Gastrocnemius medialis (tissue), 4 donors: ENCODE measurements at regions of chr12 and their contacts with region 1.

Region 1: DNA sequence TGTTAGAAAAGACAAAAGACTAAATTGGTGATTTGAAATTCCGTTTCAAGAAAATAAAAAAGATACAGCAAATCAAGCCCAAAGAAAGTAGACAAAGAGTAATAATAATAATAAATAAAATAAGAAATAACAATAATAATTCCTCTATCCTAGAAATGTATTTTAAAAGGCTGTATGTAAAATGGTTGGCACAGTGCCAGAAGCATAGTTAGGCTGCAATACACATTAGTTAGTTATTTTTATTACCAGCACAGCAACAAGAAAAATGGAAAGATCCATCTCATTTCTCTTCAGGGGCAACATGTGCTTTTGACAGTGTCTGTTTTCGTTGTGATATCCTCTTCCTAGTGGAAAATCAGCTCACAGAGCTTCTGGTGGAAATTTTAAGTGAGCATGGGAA is 174.1 kb upstream of the TMTC1 start:
- DNase-seq: no peak
- ATAC-seq: no peak
- H3K4me3 ChIP-seq: no peak overlapping the region
- H3K27ac ChIP-seq: no peak overlapping the region
- H3K4me1 ChIP-seq: no peaks in the 10 kb centered on the region
- H3K27me3 ChIP-seq: no peaks in the 10 kb centered on the region
- CTCF ChIP-seq: no peak
- POLR2A ChIP-seq: no peak

Region 2: DNA sequence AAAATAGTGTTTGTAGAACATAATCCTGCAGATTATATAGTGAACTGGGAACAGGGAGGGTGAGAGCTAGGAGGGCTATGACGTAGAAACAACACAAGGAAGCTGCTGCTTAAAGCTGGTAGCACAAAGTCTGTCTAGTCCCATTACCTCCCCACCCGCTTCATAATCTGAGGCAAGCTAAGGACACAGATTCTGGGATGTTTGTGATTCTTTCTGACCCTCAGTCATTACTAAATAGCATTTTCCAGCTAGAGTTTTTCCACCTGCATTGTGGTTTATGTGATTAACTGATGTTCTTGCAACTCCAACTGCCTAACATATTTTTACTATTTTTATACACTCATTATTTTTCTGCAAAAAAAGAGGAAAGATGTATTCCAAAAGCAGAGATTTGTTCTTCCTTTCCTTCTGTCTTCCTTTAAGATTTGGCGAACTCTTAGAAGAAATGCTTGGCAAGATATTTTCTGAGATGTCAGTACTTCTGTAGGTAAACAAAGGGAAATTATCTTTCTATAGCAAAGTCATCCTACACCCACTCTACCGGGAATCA is 1102.0 kb before region 1 on chr12:
- in situ Hi-C with region 1: no loop called
- intact Hi-C with region 1: no loop called
- DNase-seq: no peak
- ATAC-seq: no peak
- H3K4me3 ChIP-seq: no peak overlapping the region
- H3K27ac ChIP-seq: no peak overlapping the region
- H3K4me1 ChIP-seq: no peaks in the 10 kb centered on the region
- H3K27me3 ChIP-seq: no peaks in the 10 kb centered on the region
- CTCF ChIP-seq: no peak
- POLR2A ChIP-seq: no peak

Region 3: GRCh38 chr12:29782285-29782870 is 175.5 kb before region 1 on chr12:
- in situ Hi-C with region 1: no loop called
- intact Hi-C with region 1: no loop called
- DNase-seq: peak; percentile 25 to 29
- ATAC-seq: peak; percentile 66 to 68
- H3K4me3 ChIP-seq: peak overlapping the region; percentile 65 to 85 (median 74)
- H3K27ac ChIP-seq: peak overlapping the region; percentile 86 to 99 (median 97)
- H3K4me1 ChIP-seq: peaks cover 37 to 40% of the 10 kb centered on the region in 2 donors
- H3K27me3 ChIP-seq: no peaks in the 10 kb centered on the region
- CTCF ChIP-seq: no peak
- POLR2A ChIP-seq: peak; percentile 5 to 40

Region 4: GRCh38 chr12:29901585-29901984 is 56.2 kb before region 1 on chr12:
- in situ Hi-C with region 1: no loop called
- intact Hi-C with region 1: no loop called
- DNase-seq: no peak
- ATAC-seq: no peak
- H3K4me3 ChIP-seq: no peak overlapping the region
- H3K27ac ChIP-seq: no peak overlapping the region
- H3K4me1 ChIP-seq: no peaks in the 10 kb centered on the region
- H3K27me3 ChIP-seq: no peaks in the 10 kb centered on the region
- CTCF ChIP-seq: no peak
- POLR2A ChIP-seq: no peak

Region 5: GRCh38 chr12:29944269-29945000 is 13.4 kb before region 1 on chr12:
- in situ Hi-C with region 1: no loop called
- intact Hi-C with region 1: loop called (anchors 1 kb)
- DNase-seq: no peak
- ATAC-seq: no peak
- H3K4me3 ChIP-seq: no peak overlapping the region
- H3K27ac ChIP-seq: no peak overlapping the region
- H3K4me1 ChIP-seq: no peaks in the 10 kb centered on the region
- H3K27me3 ChIP-seq: no peaks in the 10 kb centered on the region
- CTCF ChIP-seq: no peak
- POLR2A ChIP-seq: no peak